Natural killer cell (primary cell): ENCODE measurements at regions of chr3 and their contacts with region 1.

Region 1: GRCh38 chr3:73056014-73056844 is 5.2 kb upstream of the EBLN2 start:
- DNase-seq: peak in 1 of 2 donors; percentile 53
- ATAC-seq: peak in 2 of 3 donors; percentile 53 to 54
- H3K4me3 ChIP-seq: no peak overlapping the region
- H3K4me3 Mint-ChIP-seq: no peak overlapping the region
- H3K27ac ChIP-seq: no peak overlapping the region
- H3K27ac Mint-ChIP-seq: peak overlapping the region; percentile 44 to 45
- H3K4me1 ChIP-seq: no peaks in the 10 kb centered on the region
- H3K4me1 Mint-ChIP-seq: peaks cover 14 to 15% of the 10 kb centered on the region in 2 donors
- H3K27me3 ChIP-seq: no peaks in the 10 kb centered on the region
- H3K27me3 Mint-ChIP-seq: no peaks in the 10 kb centered on the region
- CTCF ChIP-seq: peak; percentile 83

Region 2: GRCh38 chr3:72938471-72939265 is 117.6 kb before region 1 on chr3:
- intact Hi-C with region 1: loop called (anchors 1 kb)
- DNase-seq: peak in 1 of 2 donors; percentile 73
- ATAC-seq: peak; percentile 90 to 98 (median 93)
- H3K4me3 ChIP-seq: no peak overlapping the region
- H3K4me3 Mint-ChIP-seq: no peak overlapping the region
- H3K27ac ChIP-seq: no peak overlapping the region
- H3K27ac Mint-ChIP-seq: no peak overlapping the region
- H3K4me1 ChIP-seq: no peaks in the 10 kb centered on the region
- H3K4me1 Mint-ChIP-seq: no peaks in the 10 kb centered on the region
- H3K27me3 ChIP-seq: no peaks in the 10 kb centered on the region
- H3K27me3 Mint-ChIP-seq: peaks cover 3 to 15% of the 10 kb centered on the region in 2 donors
- CTCF ChIP-seq: peak; percentile 66

Region 3: DNA sequence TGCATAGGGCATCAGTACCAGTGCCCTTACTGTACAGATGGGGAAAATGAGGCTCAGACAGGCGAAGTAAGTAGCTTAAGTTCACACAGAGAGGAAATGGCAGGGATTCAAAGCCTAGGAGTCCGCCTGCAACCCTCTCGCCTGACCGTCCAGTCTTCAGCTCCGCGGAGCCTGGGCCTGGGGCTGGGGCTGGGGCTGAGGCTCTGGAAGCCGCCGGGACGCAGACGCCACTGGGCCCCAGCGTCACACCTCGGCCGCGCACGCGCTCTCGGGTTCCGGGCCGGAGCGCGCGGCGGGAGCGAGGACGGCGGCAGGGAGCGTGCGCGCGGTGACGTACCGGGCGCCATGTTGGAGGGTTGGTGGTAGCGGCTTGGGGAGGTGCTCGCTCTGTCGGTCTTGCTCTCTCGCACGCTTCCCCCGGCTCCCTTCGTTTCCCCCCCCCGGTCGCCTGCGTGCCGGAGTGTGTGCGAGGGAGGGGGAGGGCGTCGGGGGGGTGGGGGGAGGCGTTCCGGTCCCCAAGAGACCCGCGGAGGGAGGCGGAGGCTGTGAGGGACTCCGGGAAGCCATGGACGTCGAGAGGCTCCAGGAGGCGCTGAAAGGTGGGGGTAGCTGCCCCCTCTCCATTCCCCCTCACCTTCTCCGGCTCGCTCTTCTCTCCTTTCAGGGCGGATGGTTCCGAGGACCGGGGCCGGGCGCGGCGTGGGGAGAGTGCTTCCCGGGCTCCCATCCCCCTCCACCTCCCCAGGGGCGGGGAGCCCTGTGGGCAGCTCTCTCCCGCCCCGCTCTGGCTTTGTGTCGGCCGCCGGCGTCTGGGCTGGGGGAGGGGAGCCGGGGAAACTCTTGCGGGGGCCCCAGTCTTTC is 59.5 kb before region 1 on chr3 and contains the start of gene PPP4R2:
- intact Hi-C with region 1: loop called (anchors 10 kb)
- DNase-seq: peak; percentile 93 to 97
- ATAC-seq: peak; percentile 86 to 96 (median 89)
- H3K4me3 ChIP-seq: peak within 1 kb of the TSS; percentile 97
- H3K4me3 Mint-ChIP-seq: peak within 1 kb of the TSS; percentile 88
- H3K27ac ChIP-seq: peak within 1 kb of the TSS; percentile 97
- H3K27ac Mint-ChIP-seq: peak within 1 kb of the TSS; percentile 91 to 95
- H3K4me1 ChIP-seq: peaks cover 19% of the 10 kb centered on the region
- H3K4me1 Mint-ChIP-seq: peaks cover 35 to 38% of the 10 kb centered on the region in 2 donors
- H3K27me3 ChIP-seq: no peaks in the 10 kb centered on the region
- H3K27me3 Mint-ChIP-seq: no peaks in the 10 kb centered on the region
- CTCF ChIP-seq: no peak
- total RNA-seq, gene PPP4R2: 50.4 to 72.8 (median 60.1) TPM

Region 4: GRCh38 chr3:73070675-73071575 is 14.7 kb after region 1 on chr3:
- intact Hi-C with region 1: no loop called
- DNase-seq: no peak
- ATAC-seq: no peak
- H3K4me3 ChIP-seq: no peak overlapping the region
- H3K4me3 Mint-ChIP-seq: no peak overlapping the region
- H3K27ac ChIP-seq: no peak overlapping the region
- H3K27ac Mint-ChIP-seq: peak overlapping the region; percentile 16 to 51
- H3K4me1 ChIP-seq: peaks cover 18% of the 10 kb centered on the region
- H3K4me1 Mint-ChIP-seq: peaks cover 36 to 43% of the 10 kb centered on the region in 2 donors
- H3K27me3 ChIP-seq: no peaks in the 10 kb centered on the region
- H3K27me3 Mint-ChIP-seq: no peaks in the 10 kb centered on the region
- CTCF ChIP-seq: no peak

Region 5: GRCh38 chr3:73094125-73094524 is 37.9 kb after region 1 on chr3:
- intact Hi-C with region 1: no loop called
- DNase-seq: peak in 1 of 2 donors; percentile 9
- ATAC-seq: no peak
- H3K4me3 ChIP-seq: no peak overlapping the region
- H3K4me3 Mint-ChIP-seq: no peak overlapping the region
- H3K27ac ChIP-seq: no peak overlapping the region
- H3K27ac Mint-ChIP-seq: peak overlapping the region in 1 of 2 donors; percentile 13
- H3K4me1 ChIP-seq: peaks cover 6% of the 10 kb centered on the region
- H3K4me1 Mint-ChIP-seq: peaks cover 6% of the 10 kb centered on the region in 2 donors
- H3K27me3 ChIP-seq: no peaks in the 10 kb centered on the region
- H3K27me3 Mint-ChIP-seq: no peaks in the 10 kb centered on the region
- CTCF ChIP-seq: no peak